ENCODE measurements at regions of chr16 and their contacts with region 1.

Region 1: GRCh38 chr16:71484006-71484893 is 4.9 kb downstream of the ZNF19 start:
- DNase-seq: peak; percentile 91
- ATAC-seq: peak; percentile 90
- H3K4me3 Mint-ChIP-seq: peak overlapping the region; percentile 75
- H3K27ac Mint-ChIP-seq: peak overlapping the region; percentile 90
- H3K4me1 Mint-ChIP-seq: peaks cover 14% of the 10 kb centered on the region
- H3K27me3 Mint-ChIP-seq: peaks cover 3% of the 10 kb centered on the region

Region 2: GRCh38 chr16:71288890-71289733 is 195.1 kb before region 1 on chr16 and contains the start of gene CMTR2:
- CTCF ChIA-PET with region 1: no interaction called
- POLR2A ChIA-PET with region 1: no interaction called
- intact Hi-C with region 1: loop called in 1 of 2 experiments (anchors 1 kb)
- DNase-seq: peak; percentile 95
- ATAC-seq: peak; percentile 97
- H3K4me3 Mint-ChIP-seq: peak within 1 kb of the TSS; percentile 83
- H3K27ac Mint-ChIP-seq: peak within 1 kb of the TSS; percentile 90
- H3K4me1 Mint-ChIP-seq: peaks cover 15% of the 10 kb centered on the region
- H3K27me3 Mint-ChIP-seq: peaks cover 16% of the 10 kb centered on the region
- total RNA-seq, gene CMTR2: 15.8 to 16.5 TPM

Region 3: GRCh38 chr16:71499775-71500364 is 15.6 kb after region 1 on chr16:
- CTCF ChIA-PET with region 1: interaction called, 36 read pairs
- POLR2A ChIA-PET with region 1: no interaction called
- intact Hi-C with region 1: no loop called
- DNase-seq: peak; percentile 61
- ATAC-seq: peak; percentile 75
- H3K4me3 Mint-ChIP-seq: no peak overlapping the region
- H3K27ac Mint-ChIP-seq: no peak overlapping the region
- H3K4me1 Mint-ChIP-seq: no peaks in the 10 kb centered on the region
- H3K27me3 Mint-ChIP-seq: peaks cover 6% of the 10 kb centered on the region

Region 4: GRCh38 chr16:71808593-71809459 is 324.6 kb after region 1 on chr16 and contains the start of gene AP1G1:
- CTCF ChIA-PET with region 1: no interaction called
- POLR2A ChIA-PET with region 1: no interaction called
- intact Hi-C with region 1: loop called in 1 of 2 experiments (anchors 2 kb)
- DNase-seq: peak; percentile 96
- ATAC-seq: peak; percentile 92
- H3K4me3 Mint-ChIP-seq: peak within 1 kb of the TSS; percentile 91
- H3K27ac Mint-ChIP-seq: peak within 1 kb of the TSS; percentile 100
- H3K4me1 Mint-ChIP-seq: peaks cover 48% of the 10 kb centered on the region
- H3K27me3 Mint-ChIP-seq: no peaks in the 10 kb centered on the region
- total RNA-seq, gene AP1G1: 65.5 to 68.8 TPM

Region 5: DNA sequence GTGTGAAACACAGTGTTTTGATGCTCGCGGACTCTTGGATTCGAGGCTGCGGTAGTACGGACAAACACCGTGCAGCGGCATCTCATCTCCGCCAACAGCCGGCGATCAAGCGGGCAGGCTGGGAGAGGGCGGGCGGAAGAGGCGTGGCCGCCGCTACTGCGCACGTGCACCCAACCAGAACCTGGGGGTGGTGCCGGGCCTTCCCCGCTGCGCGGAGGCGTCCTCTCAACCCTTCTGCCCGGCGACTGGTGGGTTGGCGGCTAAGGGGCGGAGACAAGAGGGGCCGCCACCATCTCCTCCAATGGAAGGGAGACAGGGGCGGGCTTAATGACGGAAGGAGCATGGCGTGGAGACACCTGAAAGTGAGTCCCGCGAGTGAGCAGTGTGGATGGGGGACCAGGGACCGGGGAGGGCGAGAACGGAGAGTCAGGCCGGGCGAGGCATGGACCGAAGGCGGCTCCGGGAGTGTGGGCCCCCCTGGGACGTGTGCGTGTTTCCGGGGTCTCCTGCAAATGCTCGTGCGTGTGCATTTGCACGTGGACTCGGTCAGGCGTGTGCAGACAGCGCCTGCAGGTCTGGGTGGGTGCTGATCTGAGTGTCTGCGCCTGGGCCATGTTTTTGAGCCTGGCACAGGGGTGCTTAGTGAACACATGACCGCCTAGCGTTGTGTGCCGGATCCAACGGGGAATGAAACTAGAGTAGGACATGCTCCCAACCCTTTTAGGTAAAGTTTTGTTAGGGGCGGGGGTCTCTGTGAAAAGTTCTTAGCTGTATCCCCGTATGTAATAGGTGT is 524.4 kb after region 1 on chr16 and contains the start of gene DHODH:
- CTCF ChIA-PET with region 1: no interaction called
- POLR2A ChIA-PET with region 1: no interaction called
- intact Hi-C with region 1: loop called in 1 of 2 experiments (anchors 1 kb)
- DNase-seq: peak; percentile 99
- ATAC-seq: peak; percentile 99
- H3K4me3 Mint-ChIP-seq: peak within 1 kb of the TSS; percentile 94
- H3K27ac Mint-ChIP-seq: peak within 1 kb of the TSS; percentile 96
- H3K4me1 Mint-ChIP-seq: peaks cover 21% of the 10 kb centered on the region
- H3K27me3 Mint-ChIP-seq: no peaks in the 10 kb centered on the region
- total RNA-seq, gene DHODH: 15.5 to 21.4 TPM